Right lobe of liver (tissue), 6 donors: ENCODE measurements at regions of chr12 and their contacts with region 1.

Region 1: GRCh38 chr12:111444925-111445725 is 39.4 kb downstream of the SH2B3 start:
- DNase-seq: peak in 2 of 3 donors; percentile 65 to 71
- ATAC-seq: peak; percentile 60 to 75 (median 64)
- H3K4me3 ChIP-seq: no peak overlapping the region
- H3K27ac ChIP-seq: peak overlapping the region; percentile 50 to 63 (median 51)
- H3K4me1 ChIP-seq: peaks cover 0 to 31% (median 15%) of the 10 kb centered on the region in 4 donors
- H3K27me3 ChIP-seq: no peaks in the 10 kb centered on the region
- CTCF ChIP-seq: peak in 1 of 4 donors; percentile 12
- POLR2A ChIP-seq: no peak

Region 2: DNA sequence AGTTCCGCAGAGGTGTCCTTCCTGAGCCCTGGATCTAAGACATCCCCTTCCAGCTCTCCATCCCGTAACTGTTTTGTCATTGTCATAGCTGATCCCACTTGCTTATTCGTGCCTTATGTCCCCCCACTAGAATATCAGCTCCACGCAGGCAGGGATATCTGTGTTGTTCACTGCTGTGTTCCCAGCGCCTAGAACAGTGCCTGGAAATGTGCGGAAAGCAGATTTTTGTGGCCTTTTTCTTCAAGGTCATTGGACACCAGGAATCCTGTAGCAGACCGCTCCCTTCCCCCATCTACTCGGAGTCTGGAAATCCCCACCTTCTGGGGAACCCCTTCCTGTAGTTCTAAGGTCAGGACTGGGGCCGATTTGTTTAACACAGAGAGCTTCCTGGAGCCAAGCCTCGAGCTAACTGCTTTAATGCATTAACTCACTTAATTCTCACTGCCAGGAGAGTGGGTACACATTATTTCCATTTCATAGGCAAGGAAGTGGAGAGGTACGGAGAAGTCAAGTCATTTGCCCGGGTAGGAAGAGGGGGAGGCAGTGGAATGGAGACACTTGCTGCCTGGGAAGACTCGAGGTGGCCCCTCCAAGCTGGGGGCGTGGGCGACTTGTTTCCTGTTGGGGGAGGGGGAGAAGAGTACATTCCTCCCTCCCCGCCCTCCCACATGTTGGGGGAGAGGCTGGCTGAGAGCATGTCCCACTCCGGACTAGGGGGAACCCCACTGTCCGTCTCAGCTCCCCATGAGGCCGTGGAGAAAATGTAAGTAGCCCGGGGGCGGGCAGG is 40.6 kb before region 1 on chr12:
- intact Hi-C with region 1: loop called (anchors 5 to 10 kb)
- DNase-seq: no peak
- ATAC-seq: peak in 1 of 4 donors; percentile 6
- H3K4me3 ChIP-seq: peak overlapping the region; percentile 71 to 89 (median 80)
- H3K27ac ChIP-seq: peak overlapping the region; percentile 53 to 85 (median 83)
- H3K4me1 ChIP-seq: peaks cover 0 to 42% (median 0%) of the 10 kb centered on the region in 4 donors
- H3K27me3 ChIP-seq: no peaks in the 10 kb centered on the region
- CTCF ChIP-seq: no peak
- POLR2A ChIP-seq: no peak

Region 3: GRCh38 chr12:111409780-111410430 is 35.2 kb before region 1 on chr12:
- intact Hi-C with region 1: loop called in 1 of 2 experiments (anchors 5 kb)
- DNase-seq: peak in 1 of 3 donors; percentile 65
- ATAC-seq: peak in 1 of 4 donors; percentile 0
- H3K4me3 ChIP-seq: no peak overlapping the region
- H3K27ac ChIP-seq: peak overlapping the region; percentile 45 to 66 (median 66)
- H3K4me1 ChIP-seq: peaks cover 0 to 61% (median 20%) of the 10 kb centered on the region in 4 donors
- H3K27me3 ChIP-seq: no peaks in the 10 kb centered on the region
- CTCF ChIP-seq: no peak
- POLR2A ChIP-seq: peak; percentile 11

Region 4: DNA sequence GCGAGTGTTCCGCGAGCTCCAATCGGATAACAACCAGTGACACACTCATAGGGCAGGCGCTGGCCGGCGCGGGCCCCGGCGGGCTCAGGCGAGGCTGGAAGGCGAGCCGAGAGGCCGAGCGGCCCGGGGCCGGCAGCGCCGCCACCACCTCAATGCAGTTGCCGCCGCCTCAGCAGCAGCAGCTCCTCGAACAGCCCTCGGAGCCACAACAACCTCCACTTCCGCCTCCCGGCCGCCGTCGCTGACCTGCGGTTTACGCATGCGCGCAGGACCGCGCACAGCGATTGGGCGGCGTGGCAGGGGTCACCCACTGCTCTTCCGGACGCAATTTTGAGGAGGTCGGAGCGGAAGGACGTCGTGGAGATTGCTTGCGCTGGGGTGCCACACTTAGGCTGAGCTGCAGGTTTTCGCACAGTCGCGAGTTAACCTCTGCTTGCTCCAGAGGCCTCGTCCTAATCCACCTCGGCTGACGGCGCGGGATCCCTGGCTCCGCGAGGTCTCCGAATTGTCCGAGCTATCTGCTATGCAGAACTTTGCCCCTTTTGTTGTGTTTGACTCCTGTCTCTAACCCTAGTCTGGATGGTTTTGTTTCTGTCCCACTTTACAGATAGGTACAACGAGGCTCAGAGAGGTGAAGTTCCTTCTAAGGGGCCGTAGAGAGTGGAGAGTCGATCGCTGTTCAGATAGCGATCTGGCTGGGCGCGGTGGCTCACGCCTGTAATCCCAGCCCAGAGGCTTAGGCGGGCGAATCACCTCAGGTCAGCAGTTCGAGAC is 240.8 kb after region 1 on chr12 and contains the starts of genes ACAD10 and BRAP:
- intact Hi-C with region 1: no loop called
- DNase-seq: peak; percentile 92 to 95 (median 94)
- ATAC-seq: peak; percentile 93 to 96 (median 94)
- H3K4me3 ChIP-seq: peak within 1 kb of the TSS; percentile 87 to 95 (median 92)
- H3K27ac ChIP-seq: peak within 1 kb of the TSS; percentile 61 to 82 (median 74)
- H3K4me1 ChIP-seq: peaks cover 0 to 20% (median 6%) of the 10 kb centered on the region in 4 donors
- H3K27me3 ChIP-seq: no peaks in the 10 kb centered on the region
- CTCF ChIP-seq: peak in 1 of 4 donors; percentile 8
- POLR2A ChIP-seq: peak; percentile 74
- total RNA-seq, gene ACAD10: 24.7 to 41.7 (median 26.8) TPM
- total RNA-seq, gene BRAP: 5.3 to 8.1 (median 7.5) TPM